Posterior cingulate gyrus (tissue), 11 donors: ENCODE measurements at regions of chr5 and their contacts with region 1.

Region 1: DNA sequence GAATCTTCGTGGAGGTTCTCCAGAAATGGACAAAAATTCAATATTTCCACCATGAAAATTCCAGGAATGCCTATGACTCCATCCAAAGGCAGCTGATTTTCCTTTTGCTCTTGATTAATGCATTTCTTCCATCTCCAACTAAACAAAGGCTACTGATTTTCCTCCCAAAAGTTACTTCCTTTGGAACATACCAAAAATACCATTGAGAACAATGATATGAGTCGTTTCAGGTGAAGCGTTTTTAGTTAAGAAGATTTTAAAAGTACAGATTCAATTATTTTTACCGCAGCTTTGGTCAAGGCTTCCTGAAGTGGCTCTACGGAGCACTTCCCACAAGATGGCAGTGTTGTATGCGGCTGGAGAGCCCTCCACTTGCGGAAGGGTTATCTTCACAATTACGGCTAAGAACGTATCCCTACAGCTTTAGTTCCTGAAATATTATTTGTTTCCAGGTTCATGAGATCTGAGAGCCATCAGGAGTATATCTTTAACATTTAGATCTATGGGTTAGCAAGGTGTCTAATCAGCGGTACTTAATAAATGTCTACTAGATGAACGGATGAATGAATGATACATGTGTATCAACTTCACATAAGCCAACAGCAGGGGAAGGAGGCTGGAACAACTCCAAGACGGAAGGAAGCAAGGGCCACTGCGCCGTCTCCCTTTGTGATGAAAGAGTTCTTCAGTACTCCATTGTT is 35.9 kb upstream of the ARSB start:
- DNase-seq: peak; percentile 38 to 96 (median 64)

Region 2: DNA sequence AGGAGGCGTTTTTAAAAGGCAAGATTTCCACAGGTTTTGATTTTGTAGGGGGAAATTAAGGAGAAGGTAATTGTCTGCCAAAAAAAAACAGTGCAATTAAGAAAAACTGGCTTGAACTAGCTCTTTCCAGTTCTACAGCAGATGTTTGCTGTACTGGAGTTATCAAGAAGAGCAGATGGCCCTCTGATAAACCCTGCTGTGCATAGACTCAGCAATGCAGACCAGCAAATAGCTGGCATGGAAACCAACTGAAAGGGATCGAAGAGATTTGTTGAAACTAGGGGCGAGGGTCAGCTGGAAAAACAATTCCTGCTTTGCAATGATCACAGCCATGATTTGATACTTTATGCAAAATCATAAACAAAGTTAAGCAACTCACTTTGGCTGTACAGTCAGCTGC is 72.8 kb after region 1 on chr5:
- intact Hi-C with region 1: no loop called
- DNase-seq: no peak

Region 3: DNA sequence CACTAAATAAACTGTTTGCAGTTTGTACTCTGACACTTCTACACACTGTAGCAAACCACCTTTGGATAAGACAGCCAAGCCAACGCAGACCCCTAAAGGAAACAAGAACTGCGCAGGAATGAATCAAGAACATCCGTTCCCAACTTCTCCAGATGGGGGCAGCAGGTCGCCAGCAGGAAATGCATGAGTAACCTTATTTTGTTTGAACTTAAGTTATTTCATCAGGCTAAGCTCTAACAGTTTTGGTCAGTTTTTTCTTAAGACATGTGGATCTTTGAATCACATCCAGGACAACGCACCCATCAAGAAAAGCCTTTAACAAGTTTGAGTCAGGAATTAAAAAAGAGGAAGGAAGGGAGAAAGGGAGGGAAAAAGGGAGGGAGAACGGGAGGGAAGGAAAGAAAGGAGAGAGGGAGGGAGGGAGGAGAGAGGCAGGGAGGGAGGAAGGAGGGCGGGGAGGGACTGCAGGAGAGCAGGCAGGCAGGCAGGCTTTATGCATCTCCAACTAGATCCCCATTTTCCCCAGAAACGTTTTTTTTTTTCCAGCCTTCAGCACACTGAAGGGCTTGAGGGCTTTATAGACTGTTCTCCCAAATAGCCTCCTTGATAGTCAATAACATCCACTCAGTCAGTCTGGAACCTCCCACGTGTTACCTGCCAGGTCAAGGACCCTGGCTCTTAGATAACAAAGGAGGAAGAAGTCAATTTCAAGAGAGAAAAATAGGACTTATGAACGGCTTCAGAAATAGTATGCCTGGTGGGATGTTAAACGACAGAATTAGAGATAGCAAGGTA is 112.8 kb after region 1 on chr5:
- intact Hi-C with region 1: loop called (anchors 1 kb)
- DNase-seq: peak in 9 of 10 donors; percentile 38 to 90 (median 61)

Region 4: GRCh38 chr5:79464695-79465332 is 443.8 kb after region 1 on chr5:
- intact Hi-C with region 1: loop called (anchors 5 kb)
- DNase-seq: no peak

Region 5: GRCh38 chr5:79857714-79858409 is 836.9 kb after region 1 on chr5:
- intact Hi-C with region 1: loop called (anchors 10 kb)
- DNase-seq: peak; percentile 60 to 96 (median 84)

Region 6: GRCh38 chr5:80083101-80083890 is 1062.3 kb after region 1 on chr5:
- intact Hi-C with region 1: loop called (anchors 5 kb)
- DNase-seq: peak in 2 of 10 donors; percentile 23 to 39